ENCODE measurements at regions of chr9 and their contacts with region 1.

Region 1: DNA sequence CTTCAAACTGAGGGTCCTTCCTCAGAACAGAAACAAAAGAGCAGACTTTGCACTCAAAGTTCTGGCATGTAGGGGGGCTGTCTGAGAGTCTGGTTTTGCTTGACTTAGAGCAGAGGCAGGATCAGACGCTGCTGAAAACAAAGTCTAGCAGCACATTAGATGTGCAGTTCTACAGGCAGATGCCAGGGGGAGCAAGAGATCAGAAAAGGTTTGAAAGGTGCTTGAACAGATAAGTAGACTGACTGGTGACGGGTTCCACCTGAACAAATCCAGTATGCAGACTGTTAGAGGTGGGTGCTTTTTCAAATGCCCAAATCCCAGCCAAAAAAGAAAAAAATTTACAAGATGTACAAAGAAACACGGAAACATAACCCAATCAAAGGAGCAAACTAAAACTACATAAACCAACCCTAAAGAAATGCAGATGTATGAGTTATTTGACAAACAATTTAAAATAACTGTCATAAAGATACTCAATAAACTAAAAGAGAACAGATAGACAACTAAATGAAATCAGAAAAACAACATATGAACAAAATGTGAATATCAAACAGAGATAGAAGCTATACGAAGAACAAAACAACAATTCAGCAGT is 194.7 kb upstream of the FREM1 start:
- H3K4me3 Mint-ChIP-seq: no peak overlapping the region
- H3K27ac Mint-ChIP-seq: no peak overlapping the region
- H3K4me1 Mint-ChIP-seq: no peaks in the 10 kb centered on the region
- H3K27me3 Mint-ChIP-seq: no peaks in the 10 kb centered on the region

Region 2: DNA sequence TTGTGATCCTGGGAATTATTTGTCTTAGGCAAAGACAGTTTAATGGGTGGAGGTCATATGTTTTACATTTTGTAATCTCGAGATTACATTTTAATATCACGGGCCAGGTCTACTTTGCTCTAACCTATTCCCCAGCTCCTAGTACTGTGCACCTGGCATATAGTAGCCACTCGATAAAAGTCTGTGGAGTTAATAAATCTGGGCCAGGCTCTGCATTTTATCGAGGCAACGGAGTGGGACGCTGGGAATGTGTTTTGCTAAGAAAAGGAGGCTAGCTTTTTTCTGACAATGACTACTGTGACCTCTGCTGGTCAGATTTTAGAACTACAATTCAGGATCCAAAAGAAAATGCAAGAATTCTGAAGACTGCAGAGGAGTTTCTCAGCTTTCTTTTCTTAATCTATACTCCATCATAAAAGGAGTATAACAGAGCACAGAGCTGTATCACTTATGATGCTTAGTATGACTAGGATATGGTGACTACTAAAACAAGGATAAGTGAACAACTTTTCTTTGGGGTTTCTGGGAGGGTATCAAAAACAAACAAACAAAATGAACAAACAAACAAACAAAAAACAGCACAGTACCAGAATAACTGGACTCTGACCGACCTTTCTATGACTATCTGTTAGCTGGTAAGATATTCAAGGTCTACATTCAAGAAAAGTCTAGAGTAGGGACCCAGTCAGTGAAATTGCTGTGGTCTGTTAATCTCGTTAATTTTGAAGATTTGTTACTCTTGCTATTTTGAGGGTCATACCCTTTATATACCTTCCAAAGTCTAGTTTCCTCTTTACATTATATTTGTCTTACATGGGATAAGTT is 336.3 kb before region 1 on chr9:
- intact Hi-C with region 1: no loop called
- H3K4me3 Mint-ChIP-seq: no peak overlapping the region
- H3K27ac Mint-ChIP-seq: no peak overlapping the region
- H3K4me1 Mint-ChIP-seq: no peaks in the 10 kb centered on the region
- H3K27me3 Mint-ChIP-seq: peaks cover 3% of the 10 kb centered on the region

Region 3: DNA sequence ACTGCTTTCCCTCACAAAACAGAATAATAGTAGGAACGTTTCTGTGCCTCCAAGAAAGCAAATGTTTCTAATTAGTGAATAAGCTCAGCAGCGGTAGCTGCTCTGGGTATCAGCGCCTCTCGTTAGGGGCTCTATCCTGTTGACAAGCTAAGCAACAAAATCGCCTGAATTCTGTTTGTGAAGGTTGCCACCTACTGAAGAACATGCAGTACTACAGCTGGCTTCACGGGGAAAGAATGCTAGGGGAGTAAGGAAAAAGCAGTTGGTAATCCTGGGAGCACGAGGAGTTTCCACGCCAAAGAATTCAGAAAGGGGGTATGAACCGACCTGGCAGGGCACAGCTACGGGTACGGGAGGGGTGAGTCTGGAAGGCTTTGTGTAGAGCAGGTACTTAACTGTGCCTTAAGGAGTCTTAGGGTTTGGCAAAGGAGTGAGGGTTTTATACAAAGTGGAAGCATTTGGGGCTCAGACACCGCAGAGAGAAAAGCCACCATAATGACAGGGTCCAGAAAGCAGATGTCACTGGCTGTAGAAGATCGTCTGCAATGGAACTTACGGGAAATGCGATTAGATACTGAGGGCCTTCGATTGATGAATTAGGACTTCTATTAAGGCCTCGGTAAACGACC is 30.4 kb after region 1 on chr9:
- intact Hi-C with region 1: loop called (anchors 1 kb)
- H3K4me3 Mint-ChIP-seq: no peak overlapping the region
- H3K27ac Mint-ChIP-seq: no peak overlapping the region
- H3K4me1 Mint-ChIP-seq: peaks cover 5% of the 10 kb centered on the region
- H3K27me3 Mint-ChIP-seq: peaks cover 1% of the 10 kb centered on the region

Region 4: DNA sequence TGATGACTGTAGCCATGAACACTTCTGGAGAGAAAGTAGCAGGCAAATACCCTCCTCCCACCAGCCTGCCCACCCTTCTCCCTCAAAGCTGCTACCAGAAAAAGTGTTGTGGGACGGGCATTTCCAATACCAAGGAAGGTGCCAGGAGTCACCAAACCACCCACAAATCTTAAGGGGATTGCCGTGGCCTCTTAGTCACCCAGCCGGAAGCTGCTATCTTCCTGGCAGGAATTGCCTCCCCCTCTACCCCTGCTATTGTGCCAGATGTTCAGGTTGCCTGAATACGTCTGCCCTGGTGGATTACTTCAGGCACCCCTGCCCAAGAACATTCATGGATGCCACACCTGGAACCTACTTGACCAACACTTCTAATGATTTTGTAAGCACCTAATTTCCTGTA is 46.0 kb after region 1 on chr9:
- intact Hi-C with region 1: loop called (anchors 5 kb)
- H3K4me3 Mint-ChIP-seq: no peak overlapping the region
- H3K27ac Mint-ChIP-seq: no peak overlapping the region
- H3K4me1 Mint-ChIP-seq: no peaks in the 10 kb centered on the region
- H3K27me3 Mint-ChIP-seq: no peaks in the 10 kb centered on the region

Measured in dendritic cell treated with granulocyte-macrophage colony-stimulating factor and Interleukin-4, amounts not matched to agents 40 ng/mL and 50 ng/mL, for 4 days (primary cell).